ENCODE measurements at regions of chr13 and their contacts with region 1.

Region 1: GRCh38 chr13:80448725-80449124 is 107.8 kb upstream of the SPRY2 start:
- DNase-seq: no peak

Region 2: GRCh38 chr13:80428341-80429096 is 20.2 kb before region 1 on chr13:
- intact Hi-C with region 1: loop called in 1 of 2 experiments (anchors 1 kb)
- DNase-seq: no peak